Dorsolateral prefrontal cortex (tissue), 120 donors: ENCODE measurements at regions of chr1 and their contacts with region 1.

Region 1: GRCh38 chr1:51235673-51236530 is at the start of gene RNF11:
- DNase-seq: peak; percentile 83 to 96 (median 93)
- H3K4me3 ChIP-seq: peak within 1 kb of the TSS; percentile 50 to 100 (median 94)
- H3K27ac ChIP-seq: peak within 1 kb of the TSS; percentile 80 to 100 (median 98)
- H3K27me3 ChIP-seq: no peaks in the 10 kb centered on the region
- CTCF ChIP-seq: peak in 33 of 56 donors; percentile 3 to 54 (median 29)
- total RNA-seq, gene RNF11: 136 to 303 (median 221) TPM

Region 2: GRCh38 chr1:50959913-50960844 is 275.7 kb before region 1 on chr1 and contains the start of gene FAF1:
- intact Hi-C with region 1: loop called in 1 of 2 experiments (anchors 10 kb)
- DNase-seq: peak; percentile 93 to 98 (median 95)
- H3K4me3 ChIP-seq: peak within 1 kb of the TSS; percentile 51 to 98 (median 80)
- H3K27ac ChIP-seq: peak within 1 kb of the TSS; percentile 18 to 97 (median 87)
- H3K27me3 ChIP-seq: no peaks in the 10 kb centered on the region
- CTCF ChIP-seq: peak in 55 of 56 donors; percentile 19 to 68 (median 47)
- total RNA-seq, gene FAF1: 61.7 to 103 (median 81.7) TPM

Region 3: GRCh38 chr1:50968158-50968820 is 267.6 kb before region 1 on chr1:
- intact Hi-C with region 1: loop called (anchors 2 to 10 kb)
- DNase-seq: peak; percentile 76 to 91 (median 83)
- H3K4me3 ChIP-seq: peak overlapping the region; percentile 66 to 95 (median 81)
- H3K27ac ChIP-seq: peak overlapping the region; percentile 87 to 100 (median 98)
- H3K27me3 ChIP-seq: peaks cover 0 to 9% (median 0%) of the 10 kb centered on the region in 45 donors
- CTCF ChIP-seq: peak in 31 of 56 donors; percentile 3 to 54 (median 32)

Region 4: GRCh38 chr1:51192213-51192843 is 43.6 kb before region 1 on chr1:
- intact Hi-C with region 1: loop called (anchors 5 kb)
- DNase-seq: peak; percentile 37 to 82 (median 56)
- H3K4me3 ChIP-seq: no peak overlapping the region
- H3K27ac ChIP-seq: no peak overlapping the region
- H3K27me3 ChIP-seq: no peaks in the 10 kb centered on the region
- CTCF ChIP-seq: peak; percentile 62 to 90 (median 82)

Region 5: DNA sequence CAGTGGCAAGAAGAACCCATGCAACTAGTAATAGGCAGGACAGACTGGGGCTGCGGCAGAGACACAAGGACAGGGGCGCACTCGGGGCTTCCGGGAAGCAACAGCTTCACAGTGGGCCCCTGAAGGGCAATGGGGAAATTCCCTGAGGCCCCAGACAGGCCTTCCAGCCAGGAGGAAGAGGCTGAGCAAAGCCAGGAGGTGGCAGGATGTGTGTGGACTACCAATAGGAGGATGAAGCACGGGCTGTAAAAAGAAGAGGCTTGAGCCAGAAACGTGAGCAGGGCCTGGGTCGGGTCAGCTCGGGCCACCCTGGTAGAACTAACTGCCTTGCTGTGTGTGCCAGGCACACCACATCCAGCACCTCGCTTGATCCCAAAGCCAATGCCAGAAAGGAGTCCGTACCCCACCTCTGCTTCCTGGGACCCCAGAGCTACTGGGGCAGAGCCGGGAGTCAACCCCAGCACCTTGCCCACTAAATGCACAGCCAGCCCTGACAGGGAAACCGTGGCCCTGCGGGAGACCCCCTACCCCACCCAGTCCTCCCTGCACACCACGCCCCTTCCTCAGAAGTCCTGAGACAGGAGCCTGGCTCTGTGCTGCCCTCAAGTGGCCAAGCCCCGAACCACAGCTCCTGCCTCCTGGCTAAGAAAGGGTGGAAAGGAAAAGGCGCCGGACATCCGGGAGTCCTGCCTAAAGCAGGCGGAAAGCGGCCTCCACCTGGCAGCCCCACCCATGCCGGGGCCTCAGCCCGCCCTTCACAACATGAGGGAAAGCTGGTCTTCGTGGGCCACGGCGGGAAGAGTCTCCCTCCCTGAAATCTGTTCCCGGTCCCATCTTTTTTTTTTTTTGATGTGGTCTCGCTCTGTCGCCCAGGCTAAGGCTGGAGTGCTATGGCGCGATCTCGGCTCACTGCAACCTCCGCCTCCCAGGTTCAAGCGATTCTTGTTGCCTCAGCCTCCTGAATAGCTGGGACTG is 60.8 kb after region 1 on chr1:
- intact Hi-C with region 1: loop called in 1 of 2 experiments (anchors 2 kb)
- DNase-seq: peak; percentile 73 to 87 (median 82)
- H3K4me3 ChIP-seq: peak overlapping the region; percentile 45 to 79 (median 64)
- H3K27ac ChIP-seq: peak overlapping the region in 24 of 59 donors; percentile 2 to 84 (median 37)
- H3K27me3 ChIP-seq: no peaks in the 10 kb centered on the region
- CTCF ChIP-seq: peak; percentile 76 to 98 (median 94)

Region 6: DNA sequence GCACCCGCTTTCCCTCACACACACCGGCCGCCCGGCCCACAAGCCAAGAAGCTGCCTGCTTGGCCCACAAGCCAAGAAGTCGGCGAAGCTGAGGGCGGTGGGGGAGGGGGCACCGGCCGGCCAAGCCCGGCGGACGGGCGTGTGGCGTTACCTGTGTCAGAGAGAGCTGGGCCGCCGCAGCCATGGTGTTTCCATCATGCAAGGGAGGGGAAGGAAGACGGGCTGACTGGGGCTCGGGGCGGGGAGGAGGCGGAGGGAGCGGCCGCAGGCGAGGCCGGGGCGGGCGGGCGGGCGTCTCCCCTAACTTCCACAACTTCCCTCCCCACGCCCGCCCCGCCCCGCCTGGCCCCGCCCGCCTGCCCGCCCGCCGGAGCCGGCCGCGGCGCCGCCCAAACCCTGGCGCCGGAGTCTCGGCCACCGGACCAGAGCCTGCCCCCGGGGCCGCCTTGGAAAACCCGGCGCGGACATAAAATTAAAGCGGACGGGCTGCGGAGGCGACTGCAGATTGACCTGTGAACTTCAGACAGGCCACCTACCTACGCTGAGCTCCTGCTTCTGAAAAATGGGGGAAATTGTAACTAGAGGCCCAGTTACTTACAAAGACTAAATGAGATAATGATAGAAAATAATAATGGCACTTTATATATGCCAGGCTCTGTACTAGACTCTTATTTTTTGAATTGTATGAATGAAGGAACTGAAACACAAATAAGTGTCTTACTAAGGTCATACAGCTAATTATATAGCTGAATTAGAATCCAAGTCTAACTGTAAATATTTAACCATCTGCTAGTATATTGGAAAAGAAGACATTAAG is 283.4 kb after region 1 on chr1 and contains the start of gene EPS15:
- intact Hi-C with region 1: loop called in 1 of 2 experiments (anchors 5 kb)
- DNase-seq: peak; percentile 55 to 81 (median 70)
- H3K4me3 ChIP-seq: peak within 1 kb of the TSS; percentile 42 to 96 (median 76)
- H3K27ac ChIP-seq: peak within 1 kb of the TSS; percentile 58 to 99 (median 91)
- H3K27me3 ChIP-seq: no peaks in the 10 kb centered on the region
- CTCF ChIP-seq: peak in 2 of 56 donors; percentile 1 to 8
- total RNA-seq, gene EPS15: 123 to 234 (median 175) TPM

Region 7: DNA sequence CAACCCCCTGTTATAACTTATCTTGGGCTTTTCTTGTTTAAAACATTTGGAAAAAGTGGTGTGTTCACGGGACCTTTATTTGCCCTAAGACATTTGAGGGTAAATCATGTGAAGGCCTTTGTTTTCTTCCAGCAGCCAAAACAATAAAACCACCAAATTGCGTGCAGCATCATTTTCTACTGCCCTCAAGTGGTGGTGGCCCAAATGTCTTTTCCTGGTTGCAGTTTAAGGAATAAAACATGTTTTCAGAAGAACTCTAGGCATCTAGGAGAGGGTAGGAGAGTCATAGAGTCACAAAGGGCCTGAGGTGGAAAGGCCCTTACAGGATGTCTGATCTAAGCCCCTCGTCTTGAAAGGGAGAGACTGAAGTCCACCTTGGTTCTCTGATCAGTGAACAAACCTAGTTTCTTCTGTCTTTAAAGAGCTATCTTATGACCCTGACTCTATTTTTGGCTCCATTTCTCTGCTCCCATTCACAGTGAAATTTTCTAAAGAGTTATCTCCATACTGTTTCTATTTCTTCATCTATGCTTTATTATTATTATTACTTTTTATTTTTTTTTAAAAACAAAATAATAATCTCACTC is 299.2 kb after region 1 on chr1:
- intact Hi-C with region 1: loop called in 1 of 2 experiments (anchors 5 kb)
- DNase-seq: peak; percentile 28 to 84 (median 58)
- H3K4me3 ChIP-seq: peak overlapping the region in 7 of 59 donors; percentile 10 to 43 (median 16)
- H3K27ac ChIP-seq: peak overlapping the region; percentile 38 to 99 (median 92)
- H3K27me3 ChIP-seq: no peaks in the 10 kb centered on the region
- CTCF ChIP-seq: peak; percentile 62 to 93 (median 82)